ENCODE measurements at regions of chr1 and their contacts with region 1.

Region 1: DNA sequence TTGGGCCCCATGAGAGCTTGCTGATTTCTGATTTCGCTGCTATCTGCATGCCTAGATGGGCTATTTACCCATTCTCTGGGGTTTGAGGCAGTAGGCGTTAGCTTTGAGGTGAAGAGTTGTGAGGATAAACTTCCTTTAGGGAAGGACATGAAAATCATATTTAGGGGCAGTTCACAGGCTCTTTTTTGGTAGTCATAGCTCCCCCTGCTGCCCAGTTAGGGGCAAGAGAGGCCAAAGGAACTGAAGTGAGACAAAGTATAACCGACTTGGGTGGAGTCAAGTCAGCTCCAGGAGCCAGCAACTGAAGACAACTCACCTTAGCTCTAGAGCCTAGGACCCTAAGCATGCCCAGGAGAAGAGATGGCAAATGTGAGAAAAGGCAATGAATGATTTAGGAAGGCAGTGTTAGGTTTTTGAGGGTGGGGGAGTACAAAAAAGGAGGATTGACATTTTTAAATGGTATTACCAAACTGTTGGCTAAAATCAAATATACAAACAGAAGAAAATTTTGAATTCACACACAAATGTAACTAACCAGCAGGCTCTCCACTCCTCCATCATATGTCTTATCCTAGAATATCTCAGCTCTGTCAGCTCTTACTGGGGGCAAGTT is 625.2 kb downstream of the LMO4 start:
- DNase-seq: peak; percentile 73 to 76 (median 73)
- ATAC-seq: peak; percentile 85
- H3K4me3 ChIP-seq: no peak overlapping the region
- H3K27ac ChIP-seq: no peak overlapping the region
- H3K4me1 ChIP-seq: no peaks in the 10 kb centered on the region
- H3K27me3 ChIP-seq: no peaks in the 10 kb centered on the region
- CTCF ChIP-seq: peak; percentile 46 to 86 (median 81)
- POLR2A ChIP-seq: no peak

Region 2: DNA sequence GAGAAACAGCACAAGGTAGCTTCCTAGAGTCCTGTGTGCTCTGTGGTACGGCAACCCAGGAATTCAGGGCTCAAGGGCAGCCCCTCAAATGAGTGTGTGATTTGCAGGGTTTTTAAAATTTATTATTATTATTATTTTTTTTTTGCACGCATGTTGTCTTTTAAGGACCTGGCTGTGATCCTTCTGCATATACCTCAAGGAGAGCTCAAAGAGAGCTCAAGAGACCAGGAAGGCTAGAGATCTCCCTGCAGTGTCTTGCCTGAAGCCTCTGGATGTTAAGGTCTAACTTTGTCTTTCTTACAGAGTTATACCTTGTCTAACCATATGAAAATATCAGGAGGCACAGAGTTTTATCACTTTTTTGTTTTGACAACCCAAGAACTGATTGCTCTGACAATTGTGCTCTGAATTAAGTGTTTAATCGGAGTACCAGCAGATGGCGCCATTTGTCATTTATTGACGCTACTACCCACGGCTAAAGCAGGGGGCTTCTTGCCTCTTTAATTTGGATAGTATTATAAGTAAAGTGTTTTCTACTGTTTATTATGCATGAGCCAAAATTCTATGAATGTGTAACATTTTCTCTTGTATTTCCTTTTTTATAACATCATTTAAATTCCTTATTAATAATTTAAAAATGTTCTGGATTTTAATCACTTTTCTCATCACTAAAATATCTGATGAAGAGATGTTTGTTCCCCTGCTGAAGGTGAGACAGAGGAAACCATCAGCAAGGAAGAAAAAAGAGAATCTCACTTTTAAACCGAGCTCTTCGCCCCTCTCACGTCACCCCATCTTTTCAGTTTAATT is 660.9 kb before region 1 on chr1:
- intact Hi-C with region 1: loop called (anchors 10 kb)
- DNase-seq: peak; percentile 58 to 72 (median 64)
- ATAC-seq: peak; percentile 48
- H3K4me3 ChIP-seq: no peak overlapping the region
- H3K27ac ChIP-seq: no peak overlapping the region
- H3K4me1 ChIP-seq: no peaks in the 10 kb centered on the region
- H3K27me3 ChIP-seq: no peaks in the 10 kb centered on the region
- CTCF ChIP-seq: peak; percentile 36 to 76 (median 67)
- POLR2A ChIP-seq: no peak

Region 3: DNA sequence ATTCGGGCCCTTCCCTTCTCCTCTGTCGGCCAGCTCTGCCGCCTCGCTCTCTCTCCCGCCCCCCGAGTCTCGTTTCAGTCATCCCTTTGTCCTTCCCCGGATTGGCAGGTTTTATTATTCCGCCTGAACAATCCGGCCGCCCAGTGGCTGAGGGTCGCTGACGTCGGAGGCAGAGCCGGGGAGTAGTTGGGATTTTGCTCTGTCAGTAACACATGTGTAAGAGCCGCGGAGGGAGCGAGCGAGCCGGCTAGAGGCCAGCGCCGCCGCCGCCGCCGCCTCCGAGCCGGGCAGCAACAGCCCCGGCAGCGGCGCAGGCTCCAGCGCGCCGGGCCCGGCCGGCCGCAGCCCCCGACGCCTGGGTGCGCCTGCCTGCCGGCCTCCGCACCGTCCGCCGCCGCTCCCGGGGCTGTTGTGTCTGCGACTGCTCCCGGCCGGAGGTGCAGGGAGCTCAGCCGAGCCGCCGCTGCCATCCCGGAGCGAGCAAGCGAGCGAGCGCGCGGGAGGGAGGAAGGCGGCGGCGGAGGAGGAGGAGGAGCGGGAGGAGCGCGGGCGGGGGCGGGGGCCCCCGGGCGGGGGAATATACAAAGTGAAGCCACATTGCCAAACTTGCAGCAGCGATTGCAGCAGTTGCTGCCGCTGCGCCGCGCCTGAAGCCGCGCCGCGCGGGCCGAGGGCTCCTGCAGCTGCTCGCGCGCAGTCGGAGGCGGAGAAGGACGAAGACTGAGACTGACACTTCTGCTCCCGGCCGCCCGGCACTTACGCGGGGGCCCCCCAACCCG is 625.4 kb before region 1 on chr1 and contains the start of gene LMO4:
- intact Hi-C with region 1: loop called (anchors 10 kb)
- DNase-seq: peak; percentile 96 to 98 (median 96)
- ATAC-seq: peak; percentile 87
- H3K4me3 ChIP-seq: peak within 1 kb of the TSS; percentile 72 to 78
- H3K27ac ChIP-seq: peak within 1 kb of the TSS; percentile 94 to 97 (median 96)
- H3K4me1 ChIP-seq: peaks cover 29% of the 10 kb centered on the region
- H3K27me3 ChIP-seq: no peaks in the 10 kb centered on the region
- CTCF ChIP-seq: peak in 1 of 7 experiments; percentile 30
- POLR2A ChIP-seq: peak; percentile 80 to 91 (median 88)
- total RNA-seq, gene LMO4: 14.2 to 23.6 TPM

Measured in body of pancreas (tissue), 4 donors.